Common myeloid progenitor, CD34-positive (primary cell): ENCODE measurements at regions of chr2 and their contacts with region 1.

Region 1: DNA sequence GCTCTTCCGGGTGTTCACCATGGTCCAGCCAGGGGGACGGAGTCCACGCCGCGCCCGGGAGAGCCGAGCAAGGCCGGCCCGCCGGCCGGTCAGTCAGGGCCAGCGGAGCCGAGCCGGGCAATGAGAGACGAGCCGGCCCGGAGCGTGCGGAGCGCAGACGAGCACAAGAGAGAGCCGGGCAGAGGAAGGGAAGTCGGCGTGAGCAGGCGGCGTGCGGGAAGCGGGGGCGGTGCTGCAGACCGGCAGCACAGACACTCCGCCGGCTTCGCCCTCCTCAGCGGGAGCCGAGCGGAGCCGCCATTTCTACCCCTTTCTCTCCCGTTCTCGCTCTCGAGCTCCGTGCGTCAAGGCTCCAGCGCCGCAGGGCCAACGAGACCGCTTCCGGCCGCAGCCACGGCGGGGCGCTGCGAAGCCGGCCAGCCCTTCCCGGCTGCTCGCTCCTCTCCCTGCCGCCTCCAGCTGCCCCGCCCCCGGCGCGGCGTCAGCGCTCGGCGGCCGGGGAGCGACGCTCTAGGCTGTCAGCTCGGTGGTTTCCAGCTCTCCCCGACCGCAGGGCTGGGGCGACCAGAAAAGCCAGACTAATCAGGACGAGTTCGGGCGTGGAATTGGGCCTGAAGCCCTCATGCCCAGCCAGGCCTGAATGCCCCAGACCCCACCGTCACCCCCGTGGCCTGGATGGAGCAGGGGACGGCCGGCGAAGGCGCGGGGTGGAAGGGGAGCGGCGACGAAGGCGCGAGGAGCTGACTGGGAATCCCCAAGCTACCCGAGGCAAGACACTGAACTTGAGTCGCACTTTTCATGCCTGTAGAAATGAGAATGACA is at the start of gene ATAD2B:
- DNase-seq: peak; percentile 96 to 98 (median 98)
- H3K4me3 ChIP-seq: peak within 1 kb of the TSS; percentile 79 to 99 (median 94)
- H3K27ac ChIP-seq: peak within 1 kb of the TSS; percentile 96 to 98
- H3K4me1 ChIP-seq: peaks cover 11 to 24% (median 18%) of the 10 kb centered on the region in 4 experiments
- H3K27me3 ChIP-seq: no peaks in the 10 kb centered on the region

Region 2: GRCh38 chr2:23824777-23825212 is 102.2 kb before region 1 on chr2:
- CTCF ChIA-PET with region 1: interaction called, 12 read pairs
- POLR2A ChIA-PET with region 1: no interaction called
- DNase-seq: peak; percentile 61 to 81 (median 75)
- H3K4me3 ChIP-seq: no peak overlapping the region
- H3K27ac ChIP-seq: no peak overlapping the region
- H3K4me1 ChIP-seq: peaks cover 0 to 5% (median 0%) of the 10 kb centered on the region in 4 experiments
- H3K27me3 ChIP-seq: no peaks in the 10 kb centered on the region

Region 3: GRCh38 chr2:23904692-23905091 is 22.3 kb before region 1 on chr2:
- CTCF ChIA-PET with region 1: interaction called, 19 read pairs
- POLR2A ChIA-PET with region 1: no interaction called
- DNase-seq: peak in 2 of 3 donors; percentile 34 to 36
- H3K4me3 ChIP-seq: no peak overlapping the region
- H3K27ac ChIP-seq: peak overlapping the region; percentile 15 to 45
- H3K4me1 ChIP-seq: peaks cover 4 to 23% (median 11%) of the 10 kb centered on the region in 4 experiments
- H3K27me3 ChIP-seq: no peaks in the 10 kb centered on the region

Region 4: GRCh38 chr2:23912054-23912453 is 14.9 kb before region 1 on chr2:
- CTCF ChIA-PET with region 1: interaction called, 18 read pairs
- POLR2A ChIA-PET with region 1: no interaction called
- DNase-seq: no peak
- H3K4me3 ChIP-seq: no peak overlapping the region
- H3K27ac ChIP-seq: no peak overlapping the region
- H3K4me1 ChIP-seq: peaks cover 10 to 21% (median 15%) of the 10 kb centered on the region in 4 experiments
- H3K27me3 ChIP-seq: no peaks in the 10 kb centered on the region

Region 5: DNA sequence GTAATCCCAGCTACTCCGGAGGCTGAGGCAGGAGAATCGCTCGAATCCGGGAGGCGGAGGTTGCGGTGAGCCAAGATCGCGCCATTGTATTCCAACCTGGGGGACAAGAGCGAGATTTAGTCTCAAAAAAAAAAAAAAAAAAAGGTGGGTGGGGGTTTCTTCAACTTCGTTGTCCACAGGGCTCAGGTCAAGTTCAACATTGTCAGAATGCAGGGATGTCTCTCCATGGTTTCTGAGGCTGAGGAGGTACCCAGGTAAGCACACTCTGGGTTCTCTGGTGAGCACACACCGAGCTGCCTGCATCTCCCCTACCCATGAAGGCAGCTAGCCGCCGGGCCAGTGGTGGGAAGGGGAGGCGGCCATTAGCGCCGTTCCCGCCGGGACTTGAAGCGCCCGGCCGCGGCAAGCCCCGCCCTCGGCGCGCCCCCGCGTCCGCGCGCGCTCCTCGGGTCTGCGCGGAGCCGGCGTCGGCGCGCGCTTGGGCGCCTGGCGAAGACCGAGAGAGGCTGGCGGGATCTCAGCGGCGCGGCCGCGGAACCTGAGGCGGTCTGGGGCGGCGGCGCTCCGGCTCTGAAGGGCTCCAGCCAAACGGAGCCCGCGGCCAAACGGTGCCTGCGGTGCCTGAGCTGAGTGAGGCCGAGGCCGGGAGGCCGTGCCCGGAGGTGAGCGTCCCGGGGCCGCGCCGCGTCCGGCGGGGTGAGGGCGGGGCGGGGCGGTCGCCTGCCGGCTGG is 13.2 kb after region 1 on chr2 and contains the start of gene UBXN2A:
- CTCF ChIA-PET with region 1: interaction called, 48 read pairs
- POLR2A ChIA-PET with region 1: interaction called, 37 read pairs
- DNase-seq: peak; percentile 83 to 92 (median 91)
- H3K4me3 ChIP-seq: peak within 1 kb of the TSS; percentile 81 to 98 (median 90)
- H3K27ac ChIP-seq: peak within 1 kb of the TSS; percentile 54 to 80
- H3K4me1 ChIP-seq: peaks cover 8 to 28% (median 15%) of the 10 kb centered on the region in 4 experiments
- H3K27me3 ChIP-seq: no peaks in the 10 kb centered on the region

Region 6: DNA sequence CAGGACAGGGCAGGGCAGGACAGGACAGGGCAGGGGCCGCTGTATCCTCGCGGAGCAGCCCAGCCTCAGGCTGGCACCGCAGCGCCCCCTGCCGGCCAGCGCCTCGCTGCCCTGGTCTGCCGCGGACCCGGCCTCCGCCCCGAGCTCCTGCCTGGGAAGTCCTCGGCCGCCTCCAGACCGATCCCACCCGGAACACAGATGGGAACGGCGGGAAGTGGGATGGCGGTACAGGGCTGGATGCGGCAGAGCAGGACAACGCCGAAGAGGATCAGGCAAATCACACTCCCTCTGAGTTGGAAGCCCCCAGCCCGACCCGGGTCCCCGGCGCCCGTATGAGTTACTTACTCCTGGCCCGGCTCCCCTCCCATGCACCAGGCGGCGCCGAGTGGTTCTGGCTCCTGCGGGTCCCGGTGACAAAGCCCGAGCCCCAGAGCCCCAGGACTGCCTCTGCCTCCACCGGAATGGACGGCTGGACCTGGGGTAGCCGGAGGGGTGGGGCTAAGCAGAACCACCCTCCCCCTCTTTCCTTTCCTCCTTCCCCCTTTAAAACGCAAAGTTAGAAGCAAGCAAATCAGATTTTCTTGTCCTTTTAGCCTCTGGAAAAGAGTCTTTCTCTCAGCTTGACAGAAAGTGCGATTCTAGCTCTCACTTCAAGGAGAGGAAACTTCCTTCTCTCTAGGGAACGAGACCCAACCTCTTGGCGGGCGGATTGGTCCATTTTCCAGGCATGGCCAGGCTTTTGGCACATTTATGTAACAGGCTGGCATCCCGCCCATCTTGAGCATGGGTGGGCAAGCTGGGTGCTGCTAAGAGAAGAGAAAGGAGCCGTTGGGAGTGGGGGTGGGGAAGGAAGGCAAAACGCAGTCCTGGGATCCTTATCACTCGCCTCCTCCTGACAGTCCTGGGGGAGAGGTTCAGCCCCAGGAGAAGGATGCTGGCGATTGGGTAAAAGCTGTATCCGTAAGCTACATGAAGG is 157.7 kb after region 1 on chr2 and contains the start of gene TP53I3:
- CTCF ChIA-PET with region 1: interaction called, 10 read pairs
- POLR2A ChIA-PET with region 1: interaction called, 7 read pairs
- DNase-seq: peak; percentile 84 to 93 (median 91)
- H3K4me3 ChIP-seq: peak within 1 kb of the TSS; percentile 77 to 91 (median 84)
- H3K27ac ChIP-seq: peak within 1 kb of the TSS; percentile 46 to 82
- H3K4me1 ChIP-seq: peaks cover 12 to 28% (median 20%) of the 10 kb centered on the region in 4 experiments
- H3K27me3 ChIP-seq: no peaks in the 10 kb centered on the region

Region 7: DNA sequence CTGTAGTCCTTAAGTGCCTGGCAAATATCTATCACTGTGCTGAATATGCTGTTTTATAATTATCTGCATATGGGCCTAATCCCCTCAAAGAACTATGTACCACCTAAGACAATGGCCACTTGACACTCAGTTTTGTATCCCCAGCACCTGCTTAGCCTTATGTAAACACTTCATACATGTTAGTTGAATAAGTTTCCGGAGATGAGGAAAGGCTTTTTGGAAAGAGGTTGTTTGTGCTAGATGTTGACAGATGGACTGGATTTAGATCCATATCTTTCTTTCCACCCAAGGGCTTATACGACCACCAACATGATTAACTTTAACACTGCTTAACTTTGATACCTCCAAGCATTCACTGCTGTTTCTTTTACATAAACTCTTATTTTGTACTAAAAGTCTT is 311.2 kb after region 1 on chr2:
- CTCF ChIA-PET with region 1: no interaction called
- POLR2A ChIA-PET with region 1: no interaction called
- DNase-seq: no peak
- H3K4me3 ChIP-seq: no peak overlapping the region
- H3K27ac ChIP-seq: no peak overlapping the region
- H3K4me1 ChIP-seq: no peaks in the 10 kb centered on the region
- H3K27me3 ChIP-seq: no peaks in the 10 kb centered on the region